Heart right ventricle (tissue), 16 donors: ENCODE measurements at regions of chr9 and their contacts with region 1.

Region 1: DNA sequence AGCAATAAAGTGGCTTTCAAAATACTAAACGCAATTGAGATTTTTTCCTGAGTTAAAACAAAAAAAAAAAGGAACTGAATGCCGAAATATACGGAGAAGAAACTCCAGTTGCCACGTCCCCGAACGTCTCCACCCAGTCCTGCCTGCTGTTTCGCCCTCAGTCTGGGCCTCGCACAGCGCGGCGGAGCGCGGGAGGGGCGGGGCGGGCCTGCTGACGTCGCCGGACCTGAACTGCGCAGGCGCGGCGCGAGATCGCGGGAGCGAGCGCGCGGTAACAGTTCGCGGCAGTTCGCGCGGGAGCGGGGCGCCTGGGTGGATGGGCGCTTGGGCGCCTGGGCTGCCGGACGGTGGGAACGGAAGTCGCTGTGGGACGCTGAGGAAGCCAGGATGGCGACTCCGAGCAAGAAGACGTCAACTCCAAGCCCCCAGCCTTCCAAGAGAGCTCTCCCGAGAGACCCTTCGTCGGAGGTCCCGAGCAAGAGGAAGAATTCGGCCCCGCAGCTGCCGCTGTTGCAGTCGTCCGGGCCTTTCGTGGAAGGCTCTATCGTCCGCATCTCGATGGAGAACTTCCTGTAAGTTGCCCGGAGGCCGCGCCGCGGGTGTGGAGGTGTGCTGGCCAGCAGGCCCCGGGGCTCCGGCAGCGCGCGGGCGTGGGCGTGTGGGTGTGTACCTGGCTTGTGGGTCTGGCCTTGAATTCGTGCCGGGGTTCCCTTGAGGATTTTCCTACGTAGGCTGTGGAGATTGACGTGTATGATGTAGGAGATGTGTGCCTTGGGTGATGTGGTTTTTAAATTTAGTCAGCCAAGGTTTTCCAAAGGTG is at the start of gene SMC5:
- DNase-seq: peak; percentile 87 to 92
- ATAC-seq: peak; percentile 96 to 99 (median 98)
- H3K4me3 ChIP-seq: peak within 1 kb of the TSS; percentile 68 to 87 (median 82)
- H3K27ac ChIP-seq: peak within 1 kb of the TSS; percentile 77 to 98 (median 92)
- H3K4me1 ChIP-seq: peaks cover 0 to 62% (median 55%) of the 10 kb centered on the region in 9 donors
- H3K27me3 ChIP-seq: no peaks in the 10 kb centered on the region
- CTCF ChIP-seq: no peak
- total RNA-seq, gene SMC5: 9.3 to 16.4 (median 13.7) TPM

Region 2: GRCh38 chr9:69759421-69760277 is 499.3 kb before region 1 on chr9 and contains the start of gene PTAR1:
- intact Hi-C with region 1: loop called in 1 of 10 experiments (anchors 10 kb)
- DNase-seq: peak; percentile 90 to 92
- ATAC-seq: peak; percentile 97 to 98 (median 97)
- H3K4me3 ChIP-seq: peak within 1 kb of the TSS; percentile 72 to 97 (median 84)
- H3K27ac ChIP-seq: peak within 1 kb of the TSS; percentile 86 to 99 (median 98)
- H3K4me1 ChIP-seq: peaks cover 0 to 45% (median 25%) of the 10 kb centered on the region in 9 donors
- H3K27me3 ChIP-seq: no peaks in the 10 kb centered on the region
- CTCF ChIP-seq: no peak
- total RNA-seq, gene PTAR1: 21.8 to 30.2 (median 24.3) TPM

Region 3: DNA sequence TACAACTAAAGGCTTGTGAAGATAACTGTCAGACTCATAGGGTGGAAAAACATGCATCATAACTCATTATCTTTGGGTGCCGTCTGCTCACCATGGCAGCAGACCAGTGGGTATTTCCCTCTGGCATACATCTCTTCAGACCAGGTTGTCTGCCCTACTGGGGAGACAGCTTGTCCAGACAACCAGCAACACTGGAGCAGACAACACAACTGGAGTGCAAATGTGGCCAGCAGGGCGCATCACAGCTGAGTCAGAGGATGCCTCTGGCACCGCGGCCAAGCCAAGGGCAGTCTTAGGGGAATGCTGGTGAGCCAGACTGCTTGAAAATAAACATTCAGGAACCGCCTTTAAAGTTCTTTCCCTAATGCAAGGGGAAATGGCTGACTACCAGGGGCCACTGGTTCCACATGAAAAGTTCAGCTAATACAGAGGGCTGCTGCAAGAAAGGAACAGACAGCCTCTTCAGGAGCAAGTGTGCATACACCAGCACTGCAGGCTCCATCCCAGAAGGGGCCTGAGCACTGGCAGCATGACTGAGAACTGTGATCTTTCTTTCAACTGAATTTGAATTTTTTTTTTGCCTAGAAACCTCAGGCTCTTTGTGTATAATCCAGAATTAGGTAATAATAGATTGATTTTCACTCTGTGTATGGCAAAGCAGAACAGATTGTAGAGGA is 137.9 kb before region 1 on chr9:
- intact Hi-C with region 1: loop called in 1 of 10 experiments (anchors 10 kb)
- DNase-seq: peak; percentile 27 to 66
- ATAC-seq: peak in 7 of 8 donors; percentile 68 to 95 (median 81)
- H3K4me3 ChIP-seq: no peak overlapping the region
- H3K27ac ChIP-seq: peak overlapping the region in 4 of 10 donors; percentile 4 to 68 (median 40)
- H3K4me1 ChIP-seq: peaks cover 0 to 18% (median 0%) of the 10 kb centered on the region in 9 donors
- H3K27me3 ChIP-seq: no peaks in the 10 kb centered on the region
- CTCF ChIP-seq: peak in 4 of 9 donors; percentile 16 to 30 (median 24)

Region 4: DNA sequence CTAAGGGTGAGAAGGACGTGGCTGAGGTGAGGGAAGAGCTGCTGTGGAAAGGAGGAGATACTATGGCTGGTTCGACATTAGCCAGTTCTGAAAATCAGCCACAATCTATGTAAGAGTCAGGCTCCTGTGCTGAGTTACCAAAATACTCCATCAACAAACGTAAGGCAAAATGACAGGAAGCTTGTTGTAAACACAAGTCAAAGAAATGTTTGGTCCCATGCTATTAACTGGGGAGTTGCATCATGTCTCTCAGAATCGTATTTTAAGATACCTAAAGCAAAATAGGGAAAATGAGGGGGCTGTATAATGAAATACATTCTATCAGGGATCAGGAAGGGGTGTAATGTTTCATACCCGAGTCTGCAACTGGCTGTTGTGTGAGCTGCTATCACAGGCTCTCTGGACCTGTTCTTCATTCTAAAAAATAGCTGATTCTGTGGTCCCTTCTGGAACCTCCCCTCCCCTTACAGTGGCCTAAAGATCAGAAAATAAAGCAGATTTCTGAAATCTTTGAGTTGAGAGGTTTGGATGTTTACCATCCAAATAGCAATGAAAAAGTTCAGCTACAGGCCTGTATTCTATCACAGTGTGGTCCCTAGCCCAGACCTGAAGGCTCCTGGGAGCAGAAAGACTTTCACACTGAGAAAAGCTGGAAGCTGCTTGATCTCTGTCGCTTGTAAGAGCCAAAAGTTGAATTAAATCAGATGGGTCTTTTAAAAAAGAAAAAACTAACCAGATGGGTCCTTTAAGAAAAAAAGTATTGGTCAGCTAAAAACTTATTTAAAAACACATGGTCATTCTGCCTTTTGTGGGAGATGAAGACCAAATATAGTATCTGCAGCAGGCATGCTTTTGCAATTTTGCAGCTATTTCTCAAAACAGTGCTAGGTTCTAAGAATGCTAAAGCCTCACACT is 98.0 kb before region 1 on chr9:
- intact Hi-C with region 1: no loop called
- DNase-seq: no peak
- ATAC-seq: peak in 6 of 8 donors; percentile 44 to 87 (median 63)
- H3K4me3 ChIP-seq: no peak overlapping the region
- H3K27ac ChIP-seq: peak overlapping the region in 5 of 10 donors; percentile 24 to 58 (median 39)
- H3K4me1 ChIP-seq: peaks cover 0 to 22% (median 8%) of the 10 kb centered on the region in 9 donors
- H3K27me3 ChIP-seq: no peaks in the 10 kb centered on the region
- CTCF ChIP-seq: no peak

Region 5: GRCh38 chr9:70324963-70325362 is 66.1 kb after region 1 on chr9:
- intact Hi-C with region 1: loop called in 1 of 10 experiments (anchors 10 kb)
- DNase-seq: no peak
- ATAC-seq: no peak
- H3K4me3 ChIP-seq: no peak overlapping the region
- H3K27ac ChIP-seq: no peak overlapping the region
- H3K4me1 ChIP-seq: no peaks in the 10 kb centered on the region
- H3K27me3 ChIP-seq: no peaks in the 10 kb centered on the region
- CTCF ChIP-seq: no peak

Region 6: DNA sequence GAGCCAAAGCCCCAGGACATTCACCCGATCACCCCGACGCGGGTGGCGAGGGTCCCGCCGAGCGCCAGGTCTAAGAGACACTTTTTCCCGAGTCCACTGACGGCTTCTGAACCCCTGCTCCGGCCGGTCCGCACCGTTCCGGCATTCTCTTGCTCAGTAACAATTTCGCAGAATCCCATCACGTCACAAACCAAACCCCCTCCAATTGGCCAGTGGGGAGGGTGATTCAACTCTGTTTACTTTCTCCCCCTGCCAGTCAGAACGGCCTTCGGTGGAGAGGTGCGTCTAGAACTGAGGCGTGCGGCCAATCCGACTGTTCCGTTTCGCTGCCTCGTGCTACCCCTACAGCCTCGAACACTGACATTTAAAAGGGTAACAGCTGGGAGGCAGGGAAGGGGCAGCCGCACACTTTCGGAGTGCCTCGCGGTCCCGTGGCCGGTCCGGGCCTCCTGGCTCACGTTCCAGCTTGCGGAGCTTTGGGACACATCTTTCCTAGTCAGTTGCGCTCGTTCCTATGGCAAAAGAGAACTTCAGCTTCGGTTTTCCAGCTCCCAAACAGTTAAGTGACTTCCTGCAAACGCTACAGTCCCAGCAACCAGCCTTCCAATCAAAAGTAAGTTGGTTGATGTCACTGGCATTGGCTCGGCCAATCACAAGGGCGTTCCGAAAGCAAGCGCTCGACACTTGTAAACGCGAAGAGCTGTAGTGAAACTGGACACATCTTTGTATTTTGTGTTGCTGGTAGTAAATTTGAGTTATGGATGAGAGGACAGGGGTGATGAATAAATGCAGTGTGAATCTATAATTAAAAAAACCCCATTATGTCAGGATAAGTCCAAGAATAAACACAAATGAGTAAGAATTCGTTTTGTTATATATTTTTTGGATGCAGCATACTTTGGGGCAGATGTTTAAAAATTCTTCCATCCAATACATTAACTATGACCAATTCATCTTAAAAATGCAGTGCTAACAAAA is 155.2 kb after region 1 on chr9 and contains the start of gene KLF9:
- intact Hi-C with region 1: loop called in 1 of 10 experiments (anchors 10 kb)
- DNase-seq: peak; percentile 87 to 96
- ATAC-seq: peak; percentile 74 to 85 (median 81)
- H3K4me3 ChIP-seq: peak within 1 kb of the TSS; percentile 69 to 99 (median 78)
- H3K27ac ChIP-seq: peak within 1 kb of the TSS; percentile 99 to 100 (median 100)
- H3K4me1 ChIP-seq: peaks cover 12 to 67% (median 60%) of the 10 kb centered on the region in 9 donors
- H3K27me3 ChIP-seq: no peaks in the 10 kb centered on the region
- CTCF ChIP-seq: peak in 1 of 9 donors; percentile 10
- total RNA-seq, gene KLF9: 27.3 to 67.4 (median 41.1) TPM

Region 7: DNA sequence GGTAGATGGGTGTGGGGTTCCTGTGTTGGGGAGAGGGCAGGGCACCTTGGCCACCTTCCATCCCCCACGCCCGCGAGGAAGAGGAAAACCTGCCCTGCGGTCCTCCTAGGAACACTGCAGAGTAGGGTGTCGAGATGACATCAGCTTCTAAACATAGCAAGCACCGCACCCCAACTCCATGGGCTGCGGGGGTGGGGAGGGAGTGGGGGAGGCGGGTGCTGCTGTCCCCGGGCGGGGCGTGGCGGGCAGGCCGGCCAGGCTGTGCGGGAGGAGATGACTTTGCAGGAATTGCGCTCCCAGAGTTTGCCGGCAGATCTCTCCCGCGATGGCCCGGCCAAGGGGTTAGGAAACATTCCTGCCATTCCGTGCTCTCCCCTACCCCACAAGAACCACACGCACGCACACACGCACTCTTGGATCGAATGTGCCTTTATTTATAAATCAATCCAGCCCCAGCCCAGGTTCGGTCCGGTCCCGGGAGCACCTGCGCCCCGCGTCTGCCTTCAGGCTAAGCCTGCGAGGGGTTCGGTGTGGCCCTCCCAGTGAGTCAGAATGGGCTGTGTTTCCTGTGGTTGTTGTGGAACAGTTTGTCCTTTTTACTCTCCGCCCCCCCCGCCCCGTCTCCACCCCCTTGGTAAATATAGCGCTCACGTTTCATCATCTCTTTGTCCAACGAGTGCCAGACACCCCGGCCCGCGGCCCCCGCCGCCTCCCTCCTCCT is 160.8 kb after region 1 on chr9:
- intact Hi-C with region 1: loop called in 2 of 10 experiments (anchors 5 to 10 kb)
- DNase-seq: peak; percentile 96 to 97
- ATAC-seq: peak; percentile 68 to 86 (median 74)
- H3K4me3 ChIP-seq: peak overlapping the region in 9 of 10 donors; percentile 45 to 71 (median 64)
- H3K27ac ChIP-seq: peak overlapping the region; percentile 95 to 100 (median 100)
- H3K4me1 ChIP-seq: peaks cover 22 to 74% (median 60%) of the 10 kb centered on the region in 9 donors
- H3K27me3 ChIP-seq: no peaks in the 10 kb centered on the region
- CTCF ChIP-seq: peak in 2 of 9 donors; percentile 34 to 36